Activated CD4-positive, alpha-beta memory T cell treated with anti-CD3 and anti-CD28 coated beads for 36 hours (primary cell): ENCODE measurements at regions of chr1 and their contacts with region 1.

Region 1: GRCh38 chr1:193700710-193701355 is 514.4 kb upstream of the B3GALT2 start:
- DNase-seq: no peak
- H3K4me3 Mint-ChIP-seq: no peak overlapping the region
- H3K27ac Mint-ChIP-seq: peak overlapping the region; percentile 40
- H3K4me1 Mint-ChIP-seq: peaks cover 21% of the 10 kb centered on the region
- H3K27me3 Mint-ChIP-seq: no peaks in the 10 kb centered on the region

Region 2: GRCh38 chr1:193763266-193763665 is 62.4 kb after region 1 on chr1:
- CTCF ChIA-PET with region 1: no interaction called
- POLR2A ChIA-PET with region 1: no interaction called
- intact Hi-C with region 1: no loop called
- DNase-seq: no peak
- H3K4me3 Mint-ChIP-seq: no peak overlapping the region
- H3K27ac Mint-ChIP-seq: no peak overlapping the region
- H3K4me1 Mint-ChIP-seq: no peaks in the 10 kb centered on the region
- H3K27me3 Mint-ChIP-seq: no peaks in the 10 kb centered on the region

Region 3: GRCh38 chr1:193799948-193800690 is 99.3 kb after region 1 on chr1:
- CTCF ChIA-PET with region 1: no interaction called
- POLR2A ChIA-PET with region 1: no interaction called
- intact Hi-C with region 1: loop called (anchors 1 kb)
- DNase-seq: no peak
- H3K4me3 Mint-ChIP-seq: no peak overlapping the region
- H3K27ac Mint-ChIP-seq: no peak overlapping the region
- H3K4me1 Mint-ChIP-seq: peaks cover 13% of the 10 kb centered on the region
- H3K27me3 Mint-ChIP-seq: no peaks in the 10 kb centered on the region